ENCODE measurements at regions of chr3 and their contacts with region 1.

Region 1: DNA sequence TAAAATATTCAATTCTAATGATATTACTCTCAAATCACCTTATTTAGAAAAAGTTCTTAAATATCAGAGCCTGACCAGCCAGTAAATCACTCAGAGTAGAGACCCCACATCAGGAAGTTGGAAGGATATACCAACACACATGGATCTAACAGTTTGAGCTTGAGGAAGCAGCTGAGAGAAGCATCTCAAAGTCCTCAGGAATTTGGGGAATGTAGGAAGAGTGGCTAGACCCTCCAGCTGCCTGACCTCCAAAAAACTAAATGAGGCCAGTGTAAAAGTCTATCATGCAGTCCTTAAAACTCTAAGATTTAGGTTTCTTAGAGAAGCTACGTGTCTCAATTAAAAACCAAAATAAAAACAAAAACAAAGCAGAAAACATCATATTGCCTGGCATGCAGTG is 55.4 kb downstream of the SETD2 start:
- DNase-seq: no peak
- H3K4me3 Mint-ChIP-seq: no peak overlapping the region
- H3K27ac Mint-ChIP-seq: no peak overlapping the region
- H3K4me1 Mint-ChIP-seq: no peaks in the 10 kb centered on the region
- H3K27me3 Mint-ChIP-seq: no peaks in the 10 kb centered on the region

Region 2: GRCh38 chr3:47065681-47066080 is 42.9 kb before region 1 on chr3:
- CTCF ChIA-PET with region 1: no interaction called
- POLR2A ChIA-PET with region 1: no interaction called
- intact Hi-C with region 1: loop called (anchors 5 kb)
- DNase-seq: no peak
- H3K4me3 Mint-ChIP-seq: no peak overlapping the region
- H3K27ac Mint-ChIP-seq: no peak overlapping the region
- H3K4me1 Mint-ChIP-seq: peaks cover 7% of the 10 kb centered on the region
- H3K27me3 Mint-ChIP-seq: no peaks in the 10 kb centered on the region

Region 3: DNA sequence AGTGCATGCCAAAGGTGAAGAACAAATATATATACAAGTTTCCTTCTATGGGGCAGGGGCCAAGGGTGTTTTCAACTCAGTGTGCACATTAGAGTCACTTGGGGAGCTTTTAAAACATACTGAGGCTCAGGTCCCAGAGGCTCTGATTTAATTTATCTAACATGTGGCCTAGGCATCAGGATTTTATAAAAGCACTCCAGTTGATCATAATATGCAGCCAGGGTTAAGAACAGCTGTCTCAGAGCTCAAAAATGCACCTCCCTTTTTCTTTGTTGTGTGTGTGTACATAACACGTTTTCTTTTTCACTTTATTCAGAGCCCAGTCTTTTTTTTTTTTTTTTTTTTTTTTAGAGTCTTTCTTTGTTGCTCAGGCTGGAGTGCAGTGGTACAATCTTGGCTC is 113.3 kb after region 1 on chr3:
- CTCF ChIA-PET with region 1: no interaction called
- POLR2A ChIA-PET with region 1: no interaction called
- intact Hi-C with region 1: no loop called
- DNase-seq: no peak
- H3K4me3 Mint-ChIP-seq: no peak overlapping the region
- H3K27ac Mint-ChIP-seq: no peak overlapping the region
- H3K4me1 Mint-ChIP-seq: no peaks in the 10 kb centered on the region
- H3K27me3 Mint-ChIP-seq: no peaks in the 10 kb centered on the region